ENCODE measurements at regions of chrX and their contacts with region 1.

Region 1: DNA sequence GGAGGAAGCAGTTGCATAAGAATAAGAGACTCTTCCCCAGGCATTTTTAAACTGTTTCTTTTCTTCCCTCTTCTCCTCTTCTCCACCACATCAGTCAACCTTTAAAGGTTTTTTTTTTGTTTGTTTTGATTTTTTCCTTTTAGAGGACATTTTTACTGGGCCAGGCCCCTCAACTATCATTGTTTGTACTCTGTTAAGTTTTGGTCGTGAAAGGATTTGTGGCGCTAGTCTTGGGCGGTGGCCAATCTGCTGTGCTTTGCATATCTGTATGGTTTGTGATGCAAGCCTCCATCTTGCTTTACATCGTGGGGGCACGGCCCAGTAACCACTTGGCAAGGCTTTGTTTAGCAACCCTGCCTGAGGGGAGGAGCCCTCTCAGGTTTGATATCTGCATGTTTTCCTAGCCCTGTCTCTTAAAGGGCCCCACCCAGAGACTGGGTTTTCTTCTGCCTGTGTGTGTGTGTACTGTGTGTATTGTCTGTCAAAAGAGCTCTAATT is 101.9 kb upstream of the SLITRK2 start:
- DNase-seq: peak; percentile 94 to 95
- H3K4me3 ChIP-seq: peak overlapping the region; percentile 3; the same call in 1 of the 2 replicates
- H3K4me1 ChIP-seq: peaks cover 35% of the 10 kb centered on the region
- H3K27me3 ChIP-seq: no peaks in the 10 kb centered on the region

Region 2: DNA sequence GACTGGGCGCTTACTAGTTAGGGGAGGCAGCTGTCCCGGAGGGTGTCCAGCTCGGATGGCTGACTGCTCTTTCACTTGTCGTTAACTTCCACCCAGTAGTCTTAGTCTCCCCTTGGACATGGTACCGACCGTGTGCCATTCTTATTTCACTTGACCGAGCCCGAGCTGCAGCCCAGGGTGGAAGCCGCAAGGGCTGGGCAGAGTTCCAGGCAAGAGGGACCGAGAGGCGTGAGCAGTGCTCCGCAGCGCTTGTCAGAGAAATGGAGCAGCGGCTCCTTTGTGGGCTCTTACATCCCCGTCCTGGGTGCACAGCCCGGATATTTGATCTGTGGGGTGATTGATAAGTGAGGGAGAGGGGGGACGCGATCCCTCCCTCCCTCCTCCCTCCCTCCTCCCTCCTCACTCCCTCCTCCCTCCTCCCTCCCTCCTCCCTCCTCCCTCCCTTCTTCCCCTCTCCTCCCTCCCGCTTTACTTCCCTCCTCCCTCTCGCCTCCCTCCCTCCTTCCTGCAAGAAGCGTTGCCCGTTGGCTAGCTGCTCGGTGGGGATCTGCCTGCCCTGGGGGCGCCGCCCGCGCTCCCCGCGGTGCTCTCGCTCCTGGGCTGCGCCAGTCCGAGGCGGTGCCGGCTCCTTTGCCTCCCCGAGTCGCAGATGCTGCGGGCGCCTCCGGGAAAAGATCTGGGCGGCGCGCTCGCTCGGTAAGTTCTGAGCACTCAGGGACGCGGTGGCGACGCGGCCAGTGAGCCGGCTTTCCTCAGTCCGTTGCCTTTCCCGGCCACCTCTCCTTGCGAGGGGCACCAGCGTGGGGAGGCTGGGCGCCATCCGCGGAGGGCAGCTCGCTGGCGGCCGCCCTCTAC is 101.9 kb after region 1 on chrX and contains the start of gene SLITRK2:
- in situ Hi-C with region 1: loop called (anchors 25 kb)
- DNase-seq: peak; percentile 67 to 79
- H3K4me3 ChIP-seq: peak within 1 kb of the TSS; percentile 72
- H3K4me1 ChIP-seq: peaks cover 19% of the 10 kb centered on the region
- H3K27me3 ChIP-seq: no peaks in the 10 kb centered on the region

Measured in HAP-1 (cell line).